Activated T-helper 2 cell treated with anti-CD3 and anti-CD28 coated beads, Interferon-gamma antibody, Interleukin-2, Interleukin-4, amounts not matched to agents 10 μg/mL and 5 μg/mL and 100 μg/mL, durations not matched to agents 14 hours and 24 hours and 36 hours (primary cell): ENCODE measurements at regions of chr10 and their contacts with region 1.

Region 1: GRCh38 chr10:119178372-119179119 is at the start of gene PRDX3:
- DNase-seq: peak; percentile 89
- H3K4me3 Mint-ChIP-seq: peak within 1 kb of the TSS; percentile 97
- H3K27ac Mint-ChIP-seq: peak within 1 kb of the TSS; percentile 99
- H3K4me1 Mint-ChIP-seq: peaks cover 27% of the 10 kb centered on the region
- H3K27me3 Mint-ChIP-seq: no peaks in the 10 kb centered on the region
- total RNA-seq, gene PRDX3: 177 and 182 TPM in 2 replicates

Region 2: GRCh38 chr10:119120413-119120867 is 58.1 kb before region 1 on chr10:
- intact Hi-C with region 1: no loop called
- DNase-seq: no peak
- H3K4me3 Mint-ChIP-seq: no peak overlapping the region
- H3K27ac Mint-ChIP-seq: peak overlapping the region; percentile 42
- H3K4me1 Mint-ChIP-seq: peaks cover 14% of the 10 kb centered on the region
- H3K27me3 Mint-ChIP-seq: no peaks in the 10 kb centered on the region

Region 3: DNA sequence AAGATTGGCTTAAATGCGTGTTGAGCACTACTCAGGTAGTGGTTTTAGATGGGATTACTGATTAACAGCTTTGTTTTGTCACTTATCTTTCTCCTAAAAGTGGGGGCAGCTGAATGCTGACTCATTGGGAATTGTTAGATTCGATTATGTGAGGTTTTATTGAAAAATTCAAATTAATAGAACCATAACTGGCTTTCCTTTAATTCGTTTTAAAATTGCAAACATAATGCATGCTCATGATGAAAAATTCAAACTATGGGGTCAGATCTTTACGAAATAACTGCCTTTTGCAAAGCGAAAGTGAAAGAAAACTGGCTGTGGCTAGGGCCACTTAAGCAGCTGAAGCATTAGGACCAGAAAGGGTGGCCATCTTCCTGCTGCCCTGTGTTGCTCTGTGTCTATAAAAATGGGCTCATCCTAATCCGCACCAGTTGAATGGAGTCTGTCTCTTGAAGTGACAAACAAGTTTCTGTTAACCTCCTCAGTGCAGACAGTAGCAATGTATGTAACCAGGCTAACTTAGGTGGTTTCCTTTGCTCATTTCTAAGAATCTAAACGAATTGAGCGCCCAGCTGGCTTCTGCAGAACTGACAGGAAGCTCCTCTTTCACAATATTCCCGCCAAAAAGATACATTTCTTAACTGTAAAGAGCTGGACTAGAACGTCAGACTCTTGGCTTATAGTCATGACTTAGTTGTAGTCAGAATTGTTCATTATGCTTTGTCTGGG is 46.9 kb before region 1 on chr10:
- intact Hi-C with region 1: loop called (anchors 1 kb)
- DNase-seq: peak; percentile 60
- H3K4me3 Mint-ChIP-seq: peak overlapping the region; percentile 82
- H3K27ac Mint-ChIP-seq: peak overlapping the region; percentile 94
- H3K4me1 Mint-ChIP-seq: peaks cover 62% of the 10 kb centered on the region
- H3K27me3 Mint-ChIP-seq: no peaks in the 10 kb centered on the region

Region 4: GRCh38 chr10:119165171-119166110 is 13.1 kb before region 1 on chr10 and contains the start of gene SFXN4:
- intact Hi-C with region 1: loop called (anchors 1 kb)
- DNase-seq: peak; percentile 81
- H3K4me3 Mint-ChIP-seq: peak within 1 kb of the TSS; percentile 85
- H3K27ac Mint-ChIP-seq: peak within 1 kb of the TSS; percentile 93
- H3K4me1 Mint-ChIP-seq: peaks cover 37% of the 10 kb centered on the region
- H3K27me3 Mint-ChIP-seq: no peaks in the 10 kb centered on the region
- total RNA-seq, gene SFXN4: 43.5 and 44.8 TPM in 2 replicates

Region 5: GRCh38 chr10:119199231-119199992 is 20.9 kb after region 1 on chr10:
- intact Hi-C with region 1: loop called (anchors 1 kb)
- DNase-seq: peak; percentile 39
- H3K4me3 Mint-ChIP-seq: no peak overlapping the region
- H3K27ac Mint-ChIP-seq: no peak overlapping the region
- H3K4me1 Mint-ChIP-seq: peaks cover 31% of the 10 kb centered on the region
- H3K27me3 Mint-ChIP-seq: no peaks in the 10 kb centered on the region

Region 6: GRCh38 chr10:119650692-119651513 is 472.4 kb after region 1 on chr10 and contains the start of gene BAG3:
- intact Hi-C with region 1: loop called (anchors 5 kb)
- DNase-seq: peak; percentile 73
- H3K4me3 Mint-ChIP-seq: peak within 1 kb of the TSS; percentile 96
- H3K27ac Mint-ChIP-seq: peak within 1 kb of the TSS; percentile 95
- H3K4me1 Mint-ChIP-seq: peaks cover 45% of the 10 kb centered on the region
- H3K27me3 Mint-ChIP-seq: peaks cover 9% of the 10 kb centered on the region
- total RNA-seq, gene BAG3: 31.8 and 33.3 TPM in 2 replicates